Heart right ventricle (tissue), 16 donors: ENCODE measurements at regions of chr21 and their contacts with region 1.

Region 1: GRCh38 chr21:24781146-24781545 is 826.1 kb downstream of the MRPL39 start:
- DNase-seq: no peak
- ATAC-seq: no peak
- H3K4me3 ChIP-seq: no peak overlapping the region
- H3K27ac ChIP-seq: no peak overlapping the region
- H3K4me1 ChIP-seq: no peaks in the 10 kb centered on the region
- H3K27me3 ChIP-seq: no peaks in the 10 kb centered on the region
- CTCF ChIP-seq: no peak

Region 2: GRCh38 chr21:24829397-24829796 is 48.3 kb after region 1 on chr21:
- intact Hi-C with region 1: loop called in 1 of 10 experiments (anchors 10 kb)
- DNase-seq: no peak
- ATAC-seq: no peak
- H3K4me3 ChIP-seq: no peak overlapping the region
- H3K27ac ChIP-seq: peak overlapping the region in 1 of 10 donors; percentile 11
- H3K4me1 ChIP-seq: no peaks in the 10 kb centered on the region
- H3K27me3 ChIP-seq: no peaks in the 10 kb centered on the region
- CTCF ChIP-seq: no peak